Heart left ventricle (tissue), 16 donors: ENCODE measurements at regions of chr12 and their contacts with region 1.

Region 1: DNA sequence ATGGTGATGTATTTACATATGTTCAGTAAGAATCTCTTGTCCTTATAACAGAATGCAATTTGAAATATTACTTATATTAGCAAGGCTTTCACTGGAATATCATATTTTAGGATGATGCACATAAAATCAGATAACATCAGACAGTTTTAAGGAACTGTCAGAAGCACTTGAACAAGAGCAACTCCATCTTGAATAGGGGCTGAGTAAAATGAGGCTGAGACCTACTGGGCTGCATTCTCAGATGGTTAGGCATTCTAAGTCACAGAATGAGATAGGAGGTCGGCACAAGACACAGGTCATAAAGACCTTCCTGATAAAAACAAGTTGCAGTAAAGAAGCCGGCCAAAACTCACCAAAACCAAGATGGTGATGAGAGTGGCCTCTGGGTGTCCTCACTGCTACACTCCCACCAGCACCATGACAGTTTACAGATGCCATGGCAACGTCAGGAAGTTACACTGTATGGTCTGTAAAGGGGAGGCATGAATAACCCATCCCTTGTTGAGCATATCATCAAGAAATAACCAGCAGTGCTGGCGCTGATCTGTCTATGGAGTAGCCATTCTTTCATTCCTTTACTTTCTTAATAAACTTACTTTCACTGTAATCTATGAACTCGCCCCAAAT is 27.6 kb upstream of the ETV6 start:
- DNase-seq: peak in 1 of 5 donors; percentile 16
- ATAC-seq: no peak
- H3K4me3 ChIP-seq: no peak overlapping the region
- H3K27ac ChIP-seq: no peak overlapping the region
- H3K4me1 ChIP-seq: peaks cover 0 to 11% (median 0%) of the 10 kb centered on the region in 12 donors
- H3K27me3 ChIP-seq: no peaks in the 10 kb centered on the region
- CTCF ChIP-seq: peak in 11 of 12 donors; percentile 19 to 59 (median 39)
- POLR2A ChIP-seq: no peak

Region 2: GRCh38 chr12:11576104-11576503 is 45.8 kb before region 1 on chr12:
- intact Hi-C with region 1: loop called in 1 of 10 experiments (anchors 10 kb)
- DNase-seq: no peak
- ATAC-seq: no peak
- H3K4me3 ChIP-seq: no peak overlapping the region
- H3K27ac ChIP-seq: no peak overlapping the region
- H3K4me1 ChIP-seq: peaks cover 0 to 12% (median 0%) of the 10 kb centered on the region in 12 donors
- H3K27me3 ChIP-seq: no peaks in the 10 kb centered on the region
- CTCF ChIP-seq: no peak
- POLR2A ChIP-seq: no peak

Region 3: GRCh38 chr12:11891754-11892386 is 270.0 kb after region 1 on chr12:
- intact Hi-C with region 1: loop called in 1 of 10 experiments (anchors 5 kb)
- DNase-seq: peak; percentile 34 to 72 (median 60)
- ATAC-seq: peak; percentile 66 to 89 (median 83)
- H3K4me3 ChIP-seq: no peak overlapping the region
- H3K27ac ChIP-seq: peak overlapping the region in 6 of 12 donors; percentile 2 to 57 (median 40)
- H3K4me1 ChIP-seq: peaks cover 0 to 23% (median 10%) of the 10 kb centered on the region in 12 donors
- H3K27me3 ChIP-seq: no peaks in the 10 kb centered on the region
- CTCF ChIP-seq: peak in 11 of 12 donors; percentile 13 to 54 (median 35)
- POLR2A ChIP-seq: no peak

Region 4: DNA sequence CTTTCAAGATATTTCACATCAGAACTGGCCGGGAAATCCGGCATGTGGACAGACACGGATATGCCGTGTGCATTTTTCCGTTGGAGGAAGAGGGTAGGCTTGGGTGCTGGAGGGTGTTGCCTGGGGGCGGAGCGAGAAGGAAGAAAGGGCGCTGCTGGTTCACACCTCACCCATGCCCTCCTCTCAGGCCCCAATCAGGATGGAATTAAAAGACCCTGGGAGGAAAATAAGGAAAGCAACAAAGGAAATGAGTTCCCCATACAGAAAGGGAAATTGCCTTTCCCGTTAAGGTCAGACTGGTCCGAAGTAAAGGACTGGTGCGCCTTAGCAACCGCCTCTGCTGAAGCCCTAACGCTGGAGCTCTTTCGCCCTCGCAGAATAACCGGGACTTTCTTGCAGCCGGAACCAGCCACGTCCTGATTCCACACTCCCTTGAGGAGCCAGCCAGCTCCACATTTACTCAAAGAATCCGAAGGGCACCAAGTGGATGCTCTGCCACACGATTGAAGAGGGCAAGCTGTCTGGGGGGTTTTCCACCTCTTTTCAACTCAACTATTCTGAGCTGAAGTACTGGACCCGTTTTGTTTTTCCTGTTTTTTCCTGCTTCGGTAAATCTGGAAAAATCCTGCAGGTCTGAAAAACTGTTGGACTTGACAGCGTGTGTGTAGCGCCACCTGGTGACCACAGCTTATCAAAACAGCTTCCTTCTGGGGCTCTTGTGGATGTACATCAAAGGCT is 411.1 kb after region 1 on chr12:
- intact Hi-C with region 1: loop called in 4 of 10 experiments (anchors 1 to 10 kb)
- DNase-seq: peak in 4 of 5 donors; percentile 71 to 82 (median 77)
- ATAC-seq: peak; percentile 83 to 92 (median 88)
- H3K4me3 ChIP-seq: peak overlapping the region in 11 of 12 donors; percentile 1 to 59 (median 50)
- H3K27ac ChIP-seq: peak overlapping the region in 11 of 12 donors; percentile 24 to 88 (median 63)
- H3K4me1 ChIP-seq: peaks cover 0 to 15% (median 5%) of the 10 kb centered on the region in 12 donors
- H3K27me3 ChIP-seq: no peaks in the 10 kb centered on the region
- CTCF ChIP-seq: peak; percentile 66 to 93 (median 86)
- POLR2A ChIP-seq: no peak